ENCODE measurements at regions of chr6 and their contacts with region 1.

Region 1: GRCh38 chr6:80605165-80605989 is 498.9 kb downstream of the BCKDHB start:
- DNase-seq: peak; percentile 68
- H3K4me3 Mint-ChIP-seq: no peak overlapping the region
- H3K27ac Mint-ChIP-seq: peak overlapping the region; percentile 39
- H3K4me1 Mint-ChIP-seq: peaks cover 26% of the 10 kb centered on the region
- H3K27me3 Mint-ChIP-seq: no peaks in the 10 kb centered on the region
- CTCF ChIP-seq: peak; percentile 57

Region 2: DNA sequence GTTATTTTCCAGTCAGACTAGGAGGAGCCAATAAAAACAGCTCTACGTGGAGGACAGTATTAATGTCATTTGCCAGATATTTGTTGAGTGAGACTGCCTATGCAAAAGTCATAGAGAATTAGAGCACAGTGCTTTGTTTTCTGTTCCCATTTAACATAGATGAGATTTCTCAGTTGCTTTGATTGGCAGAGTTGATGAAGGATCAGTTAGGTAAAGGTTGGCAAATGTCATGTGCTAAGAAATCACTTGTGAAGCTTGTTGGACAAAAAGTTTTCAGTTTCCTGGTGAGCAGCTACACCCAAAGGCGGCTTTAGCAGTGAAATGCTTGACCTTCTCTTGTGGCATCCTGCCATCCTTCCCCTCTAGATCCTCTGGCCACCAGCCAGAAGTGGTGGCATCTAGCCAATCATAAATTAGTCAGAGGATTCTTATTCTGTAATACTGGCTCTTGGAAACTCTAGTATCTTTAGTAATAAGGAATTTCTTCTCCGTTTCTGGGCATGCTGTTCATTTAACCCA is 461.9 kb before region 1 on chr6:
- CTCF ChIA-PET with region 1: no interaction called
- POLR2A ChIA-PET with region 1: no interaction called
- intact Hi-C with region 1: no loop called
- DNase-seq: peak; percentile 98
- H3K4me3 Mint-ChIP-seq: peak overlapping the region; percentile 14
- H3K27ac Mint-ChIP-seq: peak overlapping the region; percentile 61
- H3K4me1 Mint-ChIP-seq: peaks cover 10% of the 10 kb centered on the region
- H3K27me3 Mint-ChIP-seq: no peaks in the 10 kb centered on the region
- CTCF ChIP-seq: no peak

Region 3: DNA sequence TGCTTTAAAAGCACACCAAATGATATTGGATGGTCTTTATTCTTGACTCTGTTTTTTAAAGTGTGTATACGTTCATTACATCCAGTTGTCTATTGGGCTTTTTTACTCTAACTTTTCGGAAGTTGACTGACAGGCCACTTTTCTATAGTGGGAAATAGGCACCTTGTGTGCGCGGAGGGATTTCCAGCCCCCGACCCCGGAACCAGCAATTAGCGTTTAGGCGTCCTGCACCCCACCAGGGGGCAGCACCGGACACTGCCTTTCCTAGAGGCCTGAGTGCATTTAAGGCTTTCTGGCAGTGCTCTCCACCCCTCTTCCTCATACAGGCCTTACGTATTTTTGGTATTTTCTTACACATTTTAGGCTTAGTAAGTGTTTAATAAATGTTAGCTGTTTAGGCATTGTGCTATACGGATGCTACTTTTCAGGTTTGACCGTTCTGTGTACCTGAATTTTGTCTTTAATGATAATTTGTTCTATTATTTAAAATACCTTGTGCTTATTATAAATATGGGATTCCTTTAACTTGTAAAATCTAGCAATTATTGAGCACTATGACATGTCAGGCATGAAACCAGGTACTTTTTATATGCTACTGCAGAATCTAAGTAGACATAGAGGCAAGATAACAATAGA is 267.1 kb before region 1 on chr6:
- CTCF ChIA-PET with region 1: no interaction called
- POLR2A ChIA-PET with region 1: no interaction called
- intact Hi-C with region 1: loop called (anchors 5 kb)
- DNase-seq: peak; percentile 63
- H3K4me3 Mint-ChIP-seq: no peak overlapping the region
- H3K27ac Mint-ChIP-seq: no peak overlapping the region
- H3K4me1 Mint-ChIP-seq: no peaks in the 10 kb centered on the region
- H3K27me3 Mint-ChIP-seq: no peaks in the 10 kb centered on the region
- CTCF ChIP-seq: peak; percentile 55

Region 4: GRCh38 chr6:80530103-80530502 is 75.3 kb before region 1 on chr6:
- CTCF ChIA-PET with region 1: no interaction called
- POLR2A ChIA-PET with region 1: no interaction called
- intact Hi-C with region 1: no loop called
- DNase-seq: no peak
- H3K4me3 Mint-ChIP-seq: no peak overlapping the region
- H3K27ac Mint-ChIP-seq: no peak overlapping the region
- H3K4me1 Mint-ChIP-seq: peaks cover 5% of the 10 kb centered on the region
- H3K27me3 Mint-ChIP-seq: no peaks in the 10 kb centered on the region
- CTCF ChIP-seq: no peak

Region 5: DNA sequence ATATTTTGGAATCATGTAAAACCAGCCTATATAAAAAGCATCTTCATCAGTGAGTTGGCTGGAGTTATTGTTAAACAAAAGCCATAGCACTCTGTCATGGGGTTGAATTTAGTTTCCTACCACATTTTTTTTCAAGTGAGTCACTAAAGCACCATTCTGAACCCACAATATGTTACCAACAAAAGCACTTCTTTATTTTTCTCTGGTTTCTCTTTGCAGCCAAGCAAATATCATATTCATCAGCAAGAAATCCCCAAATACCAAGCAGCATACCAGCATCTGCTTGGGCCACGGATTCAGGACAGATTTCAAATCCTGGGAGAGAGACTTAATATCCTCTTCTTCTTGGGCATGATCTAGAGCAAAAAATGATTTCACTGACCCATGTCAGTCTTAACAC is 57.5 kb before region 1 on chr6:
- CTCF ChIA-PET with region 1: interaction called, 3 read pairs
- POLR2A ChIA-PET with region 1: no interaction called
- intact Hi-C with region 1: loop called (anchors 1 kb)
- DNase-seq: peak; percentile 36
- H3K4me3 Mint-ChIP-seq: peak overlapping the region; percentile 51
- H3K27ac Mint-ChIP-seq: peak overlapping the region; percentile 68
- H3K4me1 Mint-ChIP-seq: peaks cover 58% of the 10 kb centered on the region
- H3K27me3 Mint-ChIP-seq: no peaks in the 10 kb centered on the region
- CTCF ChIP-seq: no peak

Region 6: DNA sequence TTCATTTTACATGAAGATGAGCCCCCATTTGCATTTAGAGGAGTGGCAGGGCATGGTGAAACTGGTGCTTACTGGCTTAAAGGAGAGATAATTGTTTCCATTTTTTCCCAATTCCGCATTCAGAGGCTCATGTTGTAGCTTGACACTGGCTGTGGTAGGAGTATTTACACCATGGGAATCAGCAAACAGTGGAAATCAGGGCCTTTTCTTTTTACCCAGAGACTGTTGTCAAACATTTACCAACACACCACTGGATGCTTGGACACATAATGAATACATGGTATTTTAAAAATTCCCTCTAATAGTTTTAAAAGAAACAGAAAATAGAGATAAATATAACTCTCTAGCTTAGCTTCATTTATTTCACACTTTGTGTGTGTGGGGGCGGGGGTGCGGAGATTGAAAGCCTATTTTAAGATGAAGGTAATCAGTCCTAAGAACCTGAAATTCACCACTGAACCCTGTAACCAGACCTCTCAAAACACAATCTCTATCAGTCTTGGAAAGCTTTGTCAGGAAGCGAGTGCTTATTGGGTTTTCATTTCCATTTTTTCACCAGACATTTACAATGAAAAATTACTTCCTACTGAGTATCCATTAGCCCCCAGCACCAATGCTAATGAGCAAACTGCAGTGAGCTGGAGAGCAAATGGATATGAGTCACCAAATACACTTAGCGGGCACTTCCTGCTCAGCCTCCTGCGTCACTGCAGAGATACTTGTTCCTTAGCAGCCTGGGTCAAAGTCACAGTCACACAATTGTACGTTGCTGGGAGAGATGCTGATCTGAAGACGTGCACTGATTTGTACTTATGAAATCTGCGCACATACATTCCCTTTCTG is 33.1 kb after region 1 on chr6:
- CTCF ChIA-PET with region 1: no interaction called
- POLR2A ChIA-PET with region 1: no interaction called
- intact Hi-C with region 1: no loop called
- DNase-seq: peak; percentile 82
- H3K4me3 Mint-ChIP-seq: no peak overlapping the region
- H3K27ac Mint-ChIP-seq: peak overlapping the region; percentile 64
- H3K4me1 Mint-ChIP-seq: peaks cover 7% of the 10 kb centered on the region
- H3K27me3 Mint-ChIP-seq: no peaks in the 10 kb centered on the region
- CTCF ChIP-seq: no peak

Region 7: DNA sequence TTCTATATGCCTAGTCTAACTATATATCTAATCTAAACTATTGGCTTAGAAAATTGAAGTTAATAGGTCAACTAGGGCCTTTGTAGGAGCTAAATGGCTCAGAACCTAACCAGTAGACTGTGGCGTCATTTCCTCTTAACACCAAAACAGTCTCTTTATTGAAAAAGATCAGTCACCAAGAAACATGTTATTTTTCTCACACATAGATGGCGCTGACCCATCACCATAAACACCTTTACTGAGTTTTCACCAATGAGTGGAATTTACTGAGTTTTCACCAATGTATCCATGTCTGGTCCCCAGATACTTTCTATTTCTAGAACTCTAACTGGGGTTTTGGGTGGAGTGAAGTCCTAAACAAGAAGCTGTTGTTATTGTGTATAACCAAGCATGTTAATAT is 137.1 kb after region 1 on chr6:
- CTCF ChIA-PET with region 1: no interaction called
- POLR2A ChIA-PET with region 1: no interaction called
- intact Hi-C with region 1: loop called (anchors 10 kb)
- DNase-seq: peak; percentile 47
- H3K4me3 Mint-ChIP-seq: no peak overlapping the region
- H3K27ac Mint-ChIP-seq: no peak overlapping the region
- H3K4me1 Mint-ChIP-seq: no peaks in the 10 kb centered on the region
- H3K27me3 Mint-ChIP-seq: no peaks in the 10 kb centered on the region
- CTCF ChIP-seq: peak; percentile 58

Region 8: GRCh38 chr6:80921861-80922460 is 316.6 kb after region 1 on chr6:
- CTCF ChIA-PET with region 1: no interaction called
- POLR2A ChIA-PET with region 1: no interaction called
- intact Hi-C with region 1: loop called (anchors 2 kb)
- DNase-seq: peak; percentile 18
- H3K4me3 Mint-ChIP-seq: no peak overlapping the region
- H3K27ac Mint-ChIP-seq: no peak overlapping the region
- H3K4me1 Mint-ChIP-seq: no peaks in the 10 kb centered on the region
- H3K27me3 Mint-ChIP-seq: no peaks in the 10 kb centered on the region
- CTCF ChIP-seq: no peak

Region 9: GRCh38 chr6:81465859-81466258 is 860.5 kb after region 1 on chr6:
- CTCF ChIA-PET with region 1: no interaction called
- POLR2A ChIA-PET with region 1: no interaction called
- intact Hi-C with region 1: loop called (anchors 1 kb)
- DNase-seq: peak; percentile 49
- H3K4me3 Mint-ChIP-seq: no peak overlapping the region
- H3K27ac Mint-ChIP-seq: no peak overlapping the region
- H3K4me1 Mint-ChIP-seq: no peaks in the 10 kb centered on the region
- H3K27me3 Mint-ChIP-seq: no peaks in the 10 kb centered on the region
- CTCF ChIP-seq: peak; percentile 48

Measured in MCF 10A (cell line).